CD4-positive, alpha-beta memory T cell (primary cell): ENCODE measurements at regions of chr10 and their contacts with region 1.

Region 1: GRCh38 chr10:122565728-122566206 is 5.2 kb downstream of the DMBT1 start:
- DNase-seq: peak; percentile 60 to 70 (median 63)
- H3K4me3 ChIP-seq: no peak overlapping the region
- H3K4me3 Mint-ChIP-seq: peak overlapping the region in 1 of 8 donors; percentile 6
- H3K27ac ChIP-seq: no peak overlapping the region
- H3K27ac Mint-ChIP-seq: no peak overlapping the region
- H3K4me1 ChIP-seq: peaks cover 9% of the 10 kb centered on the region
- H3K4me1 Mint-ChIP-seq: peaks cover 14 to 21% (median 19%) of the 10 kb centered on the region in 4 donors
- H3K27me3 ChIP-seq: no peaks in the 10 kb centered on the region
- H3K27me3 Mint-ChIP-seq: peaks cover 12% of the 10 kb centered on the region in 2 donors

Region 2: GRCh38 chr10:122435212-122435827 is 130.4 kb before region 1 on chr10:
- CTCF ChIA-PET with region 1: interaction called, 67 read pairs
- POLR2A ChIA-PET with region 1: no interaction called
- intact Hi-C with region 1: loop called (anchors 1 kb)
- DNase-seq: peak in 4 of 5 donors; percentile 54 to 62 (median 60)
- H3K4me3 ChIP-seq: no peak overlapping the region
- H3K4me3 Mint-ChIP-seq: no peak overlapping the region
- H3K27ac ChIP-seq: no peak overlapping the region
- H3K27ac Mint-ChIP-seq: no peak overlapping the region
- H3K4me1 ChIP-seq: no peaks in the 10 kb centered on the region
- H3K4me1 Mint-ChIP-seq: peaks cover 0 to 6% (median under 1%) of the 10 kb centered on the region in 4 donors
- H3K27me3 ChIP-seq: no peaks in the 10 kb centered on the region
- H3K27me3 Mint-ChIP-seq: no peaks in the 10 kb centered on the region

Region 3: GRCh38 chr10:122510326-122510725 is 55.4 kb before region 1 on chr10:
- CTCF ChIA-PET with region 1: interaction called, 50 read pairs
- POLR2A ChIA-PET with region 1: no interaction called
- intact Hi-C with region 1: loop called (anchors 1 kb)
- DNase-seq: no peak
- H3K4me3 ChIP-seq: no peak overlapping the region
- H3K4me3 Mint-ChIP-seq: no peak overlapping the region
- H3K27ac ChIP-seq: no peak overlapping the region
- H3K27ac Mint-ChIP-seq: no peak overlapping the region
- H3K4me1 ChIP-seq: peaks cover 21% of the 10 kb centered on the region
- H3K4me1 Mint-ChIP-seq: peaks cover 14 to 28% (median 22%) of the 10 kb centered on the region in 4 donors
- H3K27me3 ChIP-seq: no peaks in the 10 kb centered on the region
- H3K27me3 Mint-ChIP-seq: no peaks in the 10 kb centered on the region

Region 4: GRCh38 chr10:122541541-122542002 is 24.2 kb before region 1 on chr10:
- CTCF ChIA-PET with region 1: interaction called, 19 read pairs
- POLR2A ChIA-PET with region 1: interaction called, 3 read pairs
- intact Hi-C with region 1: no loop called
- DNase-seq: peak in 4 of 5 donors; percentile 31 to 53 (median 41)
- H3K4me3 ChIP-seq: peak overlapping the region in 1 of 2 donors; percentile 7
- H3K4me3 Mint-ChIP-seq: peak overlapping the region; percentile 24 to 81 (median 64)
- H3K27ac ChIP-seq: peak overlapping the region; percentile 31
- H3K27ac Mint-ChIP-seq: peak overlapping the region; percentile 23 to 80 (median 47)
- H3K4me1 ChIP-seq: peaks cover 53% of the 10 kb centered on the region
- H3K4me1 Mint-ChIP-seq: peaks cover 46 to 57% (median 50%) of the 10 kb centered on the region in 4 donors
- H3K27me3 ChIP-seq: no peaks in the 10 kb centered on the region
- H3K27me3 Mint-ChIP-seq: no peaks in the 10 kb centered on the region

Region 5: GRCh38 chr10:122665329-122665860 is 99.6 kb after region 1 on chr10:
- CTCF ChIA-PET with region 1: no interaction called
- POLR2A ChIA-PET with region 1: no interaction called
- intact Hi-C with region 1: no loop called
- DNase-seq: no peak
- H3K4me3 ChIP-seq: no peak overlapping the region
- H3K4me3 Mint-ChIP-seq: no peak overlapping the region
- H3K27ac ChIP-seq: no peak overlapping the region
- H3K27ac Mint-ChIP-seq: no peak overlapping the region
- H3K4me1 ChIP-seq: no peaks in the 10 kb centered on the region
- H3K4me1 Mint-ChIP-seq: no peaks in the 10 kb centered on the region
- H3K27me3 ChIP-seq: no peaks in the 10 kb centered on the region
- H3K27me3 Mint-ChIP-seq: peaks cover 18 to 31% of the 10 kb centered on the region in 2 donors

Region 6: GRCh38 chr10:122703439-122704118 is 137.8 kb after region 1 on chr10:
- CTCF ChIA-PET with region 1: no interaction called
- POLR2A ChIA-PET with region 1: no interaction called
- intact Hi-C with region 1: loop called (anchors 5 kb)
- DNase-seq: peak in 4 of 5 donors; percentile 20 to 28 (median 26)
- H3K4me3 ChIP-seq: no peak overlapping the region
- H3K4me3 Mint-ChIP-seq: no peak overlapping the region
- H3K27ac ChIP-seq: no peak overlapping the region
- H3K27ac Mint-ChIP-seq: no peak overlapping the region
- H3K4me1 ChIP-seq: peaks cover 11% of the 10 kb centered on the region
- H3K4me1 Mint-ChIP-seq: peaks cover 6 to 9% (median 8%) of the 10 kb centered on the region in 4 donors
- H3K27me3 ChIP-seq: no peaks in the 10 kb centered on the region
- H3K27me3 Mint-ChIP-seq: peaks cover 4 to 7% of the 10 kb centered on the region in 2 donors